ENCODE measurements at regions of chr9 and their contacts with region 1.

Region 1: GRCh38 chr9:69759421-69760277 is at the start of gene PTAR1:
- DNase-seq: peak; percentile 83
- H3K4me3 ChIP-seq: peak within 1 kb of the TSS; percentile 74 to 82 (median 77)
- H3K27ac ChIP-seq: peak within 1 kb of the TSS; percentile 70
- H3K4me1 ChIP-seq: peaks cover 5% of the 10 kb centered on the region
- H3K27me3 ChIP-seq: no peaks in the 10 kb centered on the region
- CTCF ChIP-seq: no peak
- total RNA-seq, gene PTAR1: 40.1 to 82.0 TPM

Region 2: DNA sequence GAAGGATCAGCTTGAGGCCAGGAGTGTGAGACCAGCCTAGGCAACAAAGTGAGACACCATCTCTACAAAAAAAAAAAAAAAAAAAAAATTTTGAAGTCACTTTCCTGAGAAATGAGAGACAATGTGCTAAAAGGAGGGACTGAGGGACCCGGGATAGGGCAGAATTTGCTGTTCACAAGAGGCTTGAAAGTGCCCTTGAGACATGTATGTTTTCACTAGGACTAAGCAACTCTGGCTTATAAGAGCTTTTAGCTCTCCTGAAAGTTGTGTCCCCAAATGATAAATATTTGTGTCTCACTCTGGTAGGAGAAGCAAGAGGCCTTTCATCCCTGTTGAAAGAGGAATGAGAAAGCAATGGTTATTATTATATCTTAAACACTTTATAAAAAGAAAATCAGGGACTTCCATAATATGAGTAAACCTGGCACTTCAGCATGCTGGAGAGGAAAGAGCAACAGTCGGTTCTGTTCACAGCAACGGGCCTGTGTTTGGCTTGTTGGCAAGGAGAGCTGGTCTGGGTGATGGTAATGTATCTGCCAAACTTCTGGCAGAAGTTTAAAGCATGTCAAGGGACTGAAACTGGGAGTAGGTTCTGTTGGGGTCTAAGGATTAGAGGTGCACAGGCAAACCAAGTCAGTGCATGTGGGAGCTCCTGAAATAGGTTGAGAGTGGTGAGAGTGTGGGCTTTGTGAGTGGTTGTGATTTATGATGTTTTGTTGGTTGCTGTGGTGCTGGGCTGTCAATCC is 402.4 kb before region 1 on chr9:
- CTCF ChIA-PET with region 1: no interaction called
- dilution Hi-C with region 1: no loop called
- in situ Hi-C with region 1: no loop called
- intact Hi-C with region 1: no loop called
- DNase-seq: no peak
- H3K4me3 ChIP-seq: no peak overlapping the region
- H3K27ac ChIP-seq: no peak overlapping the region
- H3K4me1 ChIP-seq: no peaks in the 10 kb centered on the region
- H3K27me3 ChIP-seq: no peaks in the 10 kb centered on the region
- CTCF ChIP-seq: no peak

Region 3: DNA sequence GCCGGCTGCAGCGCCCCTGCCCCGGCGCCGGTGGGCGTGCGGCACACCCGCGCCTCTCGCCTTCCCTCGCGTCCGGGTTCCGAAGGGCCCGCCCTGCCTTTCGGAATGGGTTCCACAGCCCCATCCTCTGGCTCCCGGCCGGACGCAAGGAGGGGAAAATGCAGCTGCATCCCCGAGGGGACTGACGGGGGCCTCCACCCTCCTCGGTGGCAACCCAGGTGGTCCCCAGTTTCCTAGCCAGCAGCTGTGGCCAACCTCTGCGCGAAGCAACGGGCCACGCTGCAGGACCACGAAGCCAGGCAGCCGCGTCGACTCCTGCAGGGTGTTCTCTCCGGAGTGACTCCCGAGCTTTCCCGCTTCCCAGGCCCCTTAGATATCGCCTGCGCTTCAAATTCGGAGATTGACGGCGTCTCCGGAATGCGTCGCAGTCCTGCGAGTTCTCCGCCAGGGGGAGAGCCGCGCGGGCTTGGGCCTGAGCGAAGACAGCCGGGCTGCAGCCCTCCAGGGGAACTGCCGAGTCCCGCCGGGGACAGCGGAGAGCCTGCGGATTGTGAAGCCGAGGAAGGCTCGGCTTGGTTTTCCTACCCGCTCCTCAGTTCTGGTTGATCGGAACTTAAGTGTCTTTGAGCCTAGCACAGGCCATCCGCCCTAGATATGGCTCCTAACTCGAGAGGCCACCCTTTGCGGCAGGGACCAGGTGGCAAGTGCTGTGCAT is 86.9 kb before region 1 on chr9:
- CTCF ChIA-PET with region 1: no interaction called
- dilution Hi-C with region 1: no loop called
- in situ Hi-C with region 1: no loop called
- intact Hi-C with region 1: loop called (anchors 2 kb)
- DNase-seq: peak; percentile 79
- H3K4me3 ChIP-seq: peak overlapping the region; percentile 47 to 71 (median 69)
- H3K27ac ChIP-seq: no peak overlapping the region
- H3K4me1 ChIP-seq: peaks cover 33% of the 10 kb centered on the region
- H3K27me3 ChIP-seq: no peaks in the 10 kb centered on the region
- CTCF ChIP-seq: peak; percentile 70 to 85

Region 4: DNA sequence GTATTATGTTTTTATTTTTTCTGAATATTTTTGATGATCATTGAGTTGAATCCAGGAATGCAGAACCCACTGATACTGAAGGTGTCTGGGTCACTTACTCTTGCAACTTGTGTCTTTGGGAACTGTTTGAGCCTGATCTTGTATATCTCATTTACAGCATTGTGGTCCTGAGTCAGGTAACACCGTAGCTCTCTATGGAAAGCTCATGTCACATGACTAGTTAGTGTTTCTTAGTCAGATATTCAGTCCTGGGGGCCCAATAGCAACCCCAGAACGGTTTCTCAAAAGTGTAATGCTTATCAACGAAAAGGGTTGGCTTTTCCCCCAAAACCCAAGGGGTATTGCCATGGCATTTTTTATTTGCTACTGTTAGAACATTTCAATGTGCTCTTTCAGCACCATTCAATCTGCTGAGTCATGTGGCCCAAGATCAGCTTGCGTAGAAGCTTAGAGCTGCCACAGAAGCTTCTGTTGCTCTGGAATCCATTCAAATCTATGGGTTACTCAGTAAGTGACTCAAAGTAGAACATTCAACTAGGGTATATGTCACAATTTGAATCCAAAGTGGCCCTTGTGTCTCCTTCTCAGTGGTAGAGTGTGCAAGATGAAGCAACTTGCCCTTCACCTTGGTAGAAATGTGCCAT is 12.2 kb after region 1 on chr9:
- CTCF ChIA-PET with region 1: no interaction called
- dilution Hi-C with region 1: no loop called
- in situ Hi-C with region 1: no loop called
- intact Hi-C with region 1: no loop called
- DNase-seq: no peak
- H3K4me3 ChIP-seq: no peak overlapping the region
- H3K27ac ChIP-seq: no peak overlapping the region
- H3K4me1 ChIP-seq: no peaks in the 10 kb centered on the region
- H3K27me3 ChIP-seq: no peaks in the 10 kb centered on the region
- CTCF ChIP-seq: no peak

Region 5: DNA sequence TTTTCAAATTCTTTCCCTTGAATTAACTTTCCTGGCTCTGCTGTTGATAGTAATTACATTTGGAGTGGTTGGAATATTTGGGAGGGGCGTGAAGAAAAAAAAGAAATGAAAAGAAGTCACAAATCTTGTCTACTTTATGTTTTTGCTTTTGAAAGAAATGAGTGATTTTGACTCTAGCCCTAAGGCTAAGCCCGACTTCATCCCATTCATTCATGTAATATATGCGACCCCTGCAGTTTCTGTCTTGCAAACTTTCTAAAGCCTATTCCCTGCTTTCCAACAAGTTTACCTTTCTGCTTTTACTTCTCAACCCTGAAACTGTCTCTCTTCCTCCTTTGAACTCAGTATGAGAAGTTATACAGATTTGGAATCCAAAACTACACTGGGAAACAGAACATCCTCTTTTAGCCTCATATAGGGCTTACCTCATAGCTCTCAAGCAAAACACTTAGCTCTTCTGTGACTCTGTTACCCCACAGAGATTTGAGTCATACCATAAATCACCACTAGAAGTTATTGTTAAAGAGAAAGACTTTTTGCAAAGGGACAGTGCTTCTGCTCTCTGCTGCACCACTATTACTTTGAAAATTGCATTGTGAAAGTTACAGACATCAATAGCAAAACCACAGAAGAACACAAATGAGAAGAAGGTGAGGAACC is 62.6 kb after region 1 on chr9:
- CTCF ChIA-PET with region 1: no interaction called
- dilution Hi-C with region 1: no loop called
- in situ Hi-C with region 1: no loop called
- intact Hi-C with region 1: no loop called
- DNase-seq: peak; percentile 25
- H3K4me3 ChIP-seq: no peak overlapping the region
- H3K27ac ChIP-seq: no peak overlapping the region
- H3K4me1 ChIP-seq: no peaks in the 10 kb centered on the region
- H3K27me3 ChIP-seq: no peaks in the 10 kb centered on the region
- CTCF ChIP-seq: no peak

Region 6: DNA sequence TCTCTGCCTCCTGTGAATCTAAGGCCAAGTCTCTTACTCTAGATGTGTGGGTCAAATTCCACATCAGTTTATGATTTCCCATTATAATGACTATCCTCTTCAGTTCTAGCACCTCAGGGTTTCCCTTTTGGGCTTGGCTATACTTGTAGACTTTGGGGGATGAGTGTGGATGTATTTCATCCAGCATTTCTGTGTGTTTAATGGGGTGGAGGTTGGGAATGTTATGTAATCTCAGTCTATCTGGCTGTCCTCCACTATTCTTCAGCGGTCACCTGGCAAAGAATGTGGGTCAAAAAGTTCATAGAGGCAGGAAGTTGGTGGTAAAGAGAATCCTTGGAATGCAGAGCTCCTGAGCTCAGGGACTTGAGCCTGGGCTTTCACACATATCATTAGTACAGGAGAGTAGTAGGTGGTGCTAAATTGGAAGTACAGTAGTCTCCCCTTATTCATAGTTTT is 125.9 kb after region 1 on chr9:
- CTCF ChIA-PET with region 1: no interaction called
- dilution Hi-C with region 1: no loop called
- in situ Hi-C with region 1: no loop called
- intact Hi-C with region 1: loop called (anchors 5 kb)
- DNase-seq: peak; percentile 89
- H3K4me3 ChIP-seq: no peak overlapping the region
- H3K27ac ChIP-seq: peak overlapping the region; percentile 77
- H3K4me1 ChIP-seq: peaks cover 27% of the 10 kb centered on the region
- H3K27me3 ChIP-seq: no peaks in the 10 kb centered on the region
- CTCF ChIP-seq: no peak

Region 7: GRCh38 chr9:69898714-69899209 is 139.1 kb after region 1 on chr9:
- CTCF ChIA-PET with region 1: interaction called, 19 read pairs
- dilution Hi-C with region 1: no loop called
- in situ Hi-C with region 1: no loop called
- intact Hi-C with region 1: no loop called
- DNase-seq: peak; percentile 89
- H3K4me3 ChIP-seq: no peak overlapping the region
- H3K27ac ChIP-seq: peak overlapping the region; percentile 55
- H3K4me1 ChIP-seq: peaks cover 32% of the 10 kb centered on the region
- H3K27me3 ChIP-seq: no peaks in the 10 kb centered on the region
- CTCF ChIP-seq: no peak

Measured in mammary epithelial cell (primary cell).